ENCODE measurements at regions of chr1 and their contacts with region 1.

Region 1: DNA sequence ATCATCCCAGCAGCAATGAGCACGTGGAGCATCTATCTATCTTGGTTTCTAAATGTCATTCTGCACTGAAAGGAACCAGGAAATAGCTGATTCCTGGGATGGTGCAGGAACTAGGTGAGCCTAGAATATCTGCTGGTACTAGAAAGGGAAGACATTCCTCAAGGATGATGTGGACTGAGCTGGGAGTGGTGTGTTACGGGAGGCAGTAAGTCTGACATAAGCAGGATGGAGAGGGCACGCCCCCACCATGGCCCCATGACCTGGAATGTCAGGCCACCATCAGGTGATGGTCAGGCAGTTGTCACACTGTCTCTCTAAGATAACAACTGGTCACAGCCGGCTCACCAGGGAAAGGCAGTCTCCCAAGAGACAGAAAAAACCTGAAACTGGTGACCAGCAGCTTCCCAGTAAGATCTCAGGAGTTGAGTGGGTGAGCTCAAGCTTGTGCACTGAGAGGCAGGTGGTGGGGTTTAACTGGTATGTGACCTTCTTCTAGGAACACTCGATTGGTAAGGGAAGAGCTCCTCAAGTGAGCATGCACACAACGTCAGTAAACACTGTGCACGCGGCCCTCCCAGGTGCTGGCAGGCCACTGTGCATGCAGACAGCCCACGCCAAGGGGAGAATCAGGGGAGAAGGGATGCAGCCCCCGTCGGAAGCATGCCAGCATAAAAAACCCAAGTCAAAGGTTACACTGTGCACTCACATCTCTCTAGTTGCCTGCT is 148.7 kb downstream of the ADSS2 start:
- DNase-seq: no peak
- H3K4me3 Mint-ChIP-seq: no peak overlapping the region
- H3K27ac Mint-ChIP-seq: no peak overlapping the region
- H3K4me1 Mint-ChIP-seq: peaks cover 11% of the 10 kb centered on the region
- H3K27me3 Mint-ChIP-seq: peaks cover 4% of the 10 kb centered on the region

Region 2: DNA sequence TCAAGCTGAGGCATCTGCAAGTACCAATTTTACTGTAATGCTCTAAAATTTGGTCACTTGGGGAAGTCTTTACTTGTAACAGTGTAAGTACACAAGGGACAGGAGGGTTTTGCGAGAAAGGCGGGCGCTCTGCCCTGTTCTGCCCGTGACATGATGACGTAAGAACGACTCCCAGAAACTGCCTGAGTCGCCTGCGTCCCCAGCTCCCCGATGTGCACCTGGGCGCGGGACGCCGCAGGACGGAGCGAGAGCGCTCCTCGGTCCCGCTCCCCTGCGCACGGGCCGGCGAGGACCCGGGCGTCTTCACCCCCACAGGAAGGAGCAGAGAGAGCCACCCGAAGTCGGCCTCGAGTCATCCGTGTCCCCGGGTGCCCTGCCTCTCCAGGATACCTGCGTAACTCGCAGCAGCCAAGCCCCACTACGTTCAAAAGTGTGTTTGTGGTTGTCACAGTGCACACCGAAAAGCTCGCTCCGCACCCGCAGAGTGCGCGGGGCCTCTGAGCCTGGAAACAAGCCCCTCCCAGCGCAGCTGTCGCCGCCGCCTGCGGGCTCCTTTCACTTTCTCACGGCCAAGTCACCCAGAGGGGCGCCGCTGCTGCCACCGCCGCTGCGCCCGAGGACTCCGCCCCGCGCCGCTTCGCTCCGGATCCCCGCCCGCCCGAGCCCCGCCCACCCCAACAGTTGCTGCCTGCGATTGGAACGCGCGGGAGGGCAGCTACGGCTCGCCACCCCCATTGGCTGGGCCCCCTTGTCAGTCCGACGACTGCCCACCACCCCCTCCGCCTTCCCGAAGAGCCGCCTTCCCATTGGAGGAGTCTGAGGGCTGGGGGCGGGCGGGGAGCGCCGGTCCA is 255.2 kb before region 1 on chr1:
- CTCF ChIA-PET with region 1: interaction called, 4 read pairs
- POLR2A ChIA-PET with region 1: interaction called, 12 read pairs
- DNase-seq: peak; percentile 98
- H3K4me3 Mint-ChIP-seq: peak overlapping the region; percentile 95
- H3K27ac Mint-ChIP-seq: peak overlapping the region; percentile 94
- H3K4me1 Mint-ChIP-seq: peaks cover 32% of the 10 kb centered on the region
- H3K27me3 Mint-ChIP-seq: peaks cover 31% of the 10 kb centered on the region

Region 3: DNA sequence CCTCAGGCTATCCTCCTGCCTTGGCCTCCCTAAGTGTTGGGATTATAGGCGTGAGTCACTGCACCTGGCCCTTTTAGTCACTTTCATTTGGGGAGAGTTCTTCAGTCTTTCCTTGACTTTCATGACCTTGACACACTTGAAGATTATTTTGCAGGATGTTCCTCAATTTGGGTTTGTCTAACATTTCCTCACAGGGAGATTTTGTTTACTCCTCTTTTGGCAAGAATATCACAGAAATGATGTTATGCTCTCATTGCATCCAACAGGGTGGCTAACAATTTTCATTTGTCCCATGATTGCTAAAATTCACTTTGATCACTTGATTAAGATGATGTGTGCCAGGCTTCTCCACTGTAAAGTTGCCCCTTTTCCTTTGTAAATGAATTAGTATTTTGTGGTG is 15.3 kb before region 1 on chr1:
- CTCF ChIA-PET with region 1: interaction called, 12 read pairs
- POLR2A ChIA-PET with region 1: interaction called, 3 read pairs
- DNase-seq: no peak
- H3K4me3 Mint-ChIP-seq: no peak overlapping the region
- H3K27ac Mint-ChIP-seq: no peak overlapping the region
- H3K4me1 Mint-ChIP-seq: peaks cover 11% of the 10 kb centered on the region
- H3K27me3 Mint-ChIP-seq: peaks cover 4% of the 10 kb centered on the region

Region 4: DNA sequence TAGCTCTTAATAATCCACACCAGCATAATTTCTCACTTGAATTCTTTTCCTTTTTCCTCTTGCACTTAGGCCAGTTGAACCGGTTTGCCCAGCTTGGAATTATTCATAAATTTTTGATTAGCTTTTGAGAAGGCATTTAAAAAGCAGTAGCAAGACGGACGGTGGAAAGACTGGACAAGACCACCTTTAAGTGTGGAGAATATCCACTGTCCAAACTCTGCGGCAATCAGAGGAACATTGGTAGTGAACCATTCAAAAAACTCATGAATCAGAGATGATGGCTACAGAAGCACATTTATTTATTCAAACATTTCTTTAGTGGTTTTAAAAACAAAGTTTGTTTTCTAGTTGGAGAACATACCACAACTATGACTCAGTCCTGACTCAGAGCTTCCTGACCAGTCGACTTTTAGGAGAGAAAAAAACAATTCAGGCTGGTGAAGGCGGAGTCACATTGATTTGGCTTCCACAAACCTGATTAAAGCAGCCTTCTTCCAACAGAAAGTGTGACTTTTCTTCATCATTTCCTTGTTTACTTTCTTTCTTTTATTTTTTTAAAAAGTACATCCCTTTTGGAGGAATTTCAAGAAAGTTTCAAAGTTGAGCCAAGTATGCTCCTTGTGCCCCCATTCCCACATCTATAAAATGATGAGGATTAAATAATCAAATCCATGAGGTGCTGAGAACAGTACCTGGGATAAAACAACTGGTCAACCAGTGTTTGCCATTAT is 19.9 kb after region 1 on chr1:
- CTCF ChIA-PET with region 1: interaction called, 33 read pairs
- POLR2A ChIA-PET with region 1: interaction called, 8 read pairs
- DNase-seq: peak; percentile 63
- H3K4me3 Mint-ChIP-seq: peak overlapping the region; percentile 73
- H3K27ac Mint-ChIP-seq: peak overlapping the region; percentile 95
- H3K4me1 Mint-ChIP-seq: peaks cover 82% of the 10 kb centered on the region
- H3K27me3 Mint-ChIP-seq: no peaks in the 10 kb centered on the region

Measured in activated CD4-positive, alpha-beta memory T cell treated with anti-CD3 and anti-CD28 coated beads, Interleukin-2, amount 10 ng/mL, durations not matched to agents 7 days and 5 days (primary cell).